ENCODE measurements at regions of chr7 and their contacts with region 1.

Region 1: DNA sequence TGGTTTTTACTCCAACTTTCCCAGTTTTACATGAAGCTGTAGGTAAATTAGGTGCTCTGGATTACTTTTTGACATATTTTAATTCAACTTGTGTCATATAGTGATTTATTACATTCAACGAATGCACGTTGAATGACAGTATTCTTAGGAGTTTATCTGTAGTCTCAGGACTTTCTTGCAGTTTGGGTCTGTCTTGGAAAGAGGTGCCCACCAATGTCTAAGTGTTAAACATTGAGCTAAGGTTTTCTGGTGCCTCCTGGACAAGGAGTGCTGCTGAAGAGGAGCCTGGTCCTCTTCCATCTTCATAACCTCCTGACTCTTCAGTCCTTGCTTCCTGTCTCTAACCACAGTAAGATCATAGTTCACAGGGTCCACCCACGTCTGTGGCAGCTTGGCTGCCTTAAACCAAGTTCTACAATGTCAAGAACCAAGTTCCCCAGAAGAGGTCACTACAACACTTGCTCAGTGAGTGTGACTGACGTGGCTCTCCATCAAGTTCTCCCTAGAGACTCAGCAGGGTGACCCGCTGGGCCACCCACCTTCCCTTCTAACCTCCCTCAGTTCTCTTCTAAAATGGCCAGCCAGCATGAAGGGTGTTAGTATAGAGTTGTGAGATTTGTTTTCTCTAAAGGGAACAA is 6.1 kb downstream of the NPY start:
- DNase-seq: peak; percentile 81
- CTCF ChIP-seq: peak; percentile 36

Region 2: GRCh38 chr7:24381894-24382505 is 91.9 kb after region 1 on chr7:
- in situ Hi-C with region 1: loop called (anchors 10 kb)
- DNase-seq: peak; percentile 61
- CTCF ChIP-seq: peak; percentile 32

Region 3: GRCh38 chr7:24800667-24801066 is 510.5 kb after region 1 on chr7:
- in situ Hi-C with region 1: loop called (anchors 10 kb)
- DNase-seq: no peak
- CTCF ChIP-seq: no peak